Activated CD4-positive, alpha-beta memory T cell treated with anti-CD3 and anti-CD28 coated beads for 36 hours (primary cell): ENCODE measurements at regions of chr20 and their contacts with region 1.

Region 1: DNA sequence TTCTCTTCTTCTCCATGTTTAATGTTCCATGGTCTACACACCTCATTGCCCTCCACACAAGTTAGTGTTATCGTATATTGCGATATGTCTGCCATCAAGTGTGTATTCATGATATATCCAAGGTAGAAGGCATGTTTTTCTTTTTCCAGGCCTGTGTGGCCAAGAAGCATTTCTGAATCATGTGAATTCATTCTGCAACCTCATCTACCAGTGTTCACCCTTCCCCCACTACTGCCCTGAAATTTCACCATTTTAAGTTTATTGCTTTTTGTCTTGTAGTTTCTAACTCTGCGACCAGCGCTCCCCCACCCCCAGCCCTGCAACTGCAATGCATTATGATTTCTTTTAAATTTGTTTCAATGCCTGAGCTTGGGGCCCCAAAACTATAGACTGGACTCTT is 618.0 kb upstream of the FLRT3 start:
- DNase-seq: peak; percentile 10
- H3K4me3 Mint-ChIP-seq: no peak overlapping the region
- H3K27ac Mint-ChIP-seq: no peak overlapping the region
- H3K4me1 Mint-ChIP-seq: no peaks in the 10 kb centered on the region
- H3K27me3 Mint-ChIP-seq: no peaks in the 10 kb centered on the region

Region 2: GRCh38 chr20:14860410-14860814 is 95.0 kb before region 1 on chr20:
- CTCF ChIA-PET with region 1: no interaction called
- POLR2A ChIA-PET with region 1: no interaction called
- intact Hi-C with region 1: loop called (anchors 2 kb)
- DNase-seq: no peak
- H3K4me3 Mint-ChIP-seq: no peak overlapping the region
- H3K27ac Mint-ChIP-seq: no peak overlapping the region
- H3K4me1 Mint-ChIP-seq: no peaks in the 10 kb centered on the region
- H3K27me3 Mint-ChIP-seq: no peaks in the 10 kb centered on the region